AG04450 (cell line): ENCODE measurements at regions of chr1 and their contacts with region 1.

Region 1: DNA sequence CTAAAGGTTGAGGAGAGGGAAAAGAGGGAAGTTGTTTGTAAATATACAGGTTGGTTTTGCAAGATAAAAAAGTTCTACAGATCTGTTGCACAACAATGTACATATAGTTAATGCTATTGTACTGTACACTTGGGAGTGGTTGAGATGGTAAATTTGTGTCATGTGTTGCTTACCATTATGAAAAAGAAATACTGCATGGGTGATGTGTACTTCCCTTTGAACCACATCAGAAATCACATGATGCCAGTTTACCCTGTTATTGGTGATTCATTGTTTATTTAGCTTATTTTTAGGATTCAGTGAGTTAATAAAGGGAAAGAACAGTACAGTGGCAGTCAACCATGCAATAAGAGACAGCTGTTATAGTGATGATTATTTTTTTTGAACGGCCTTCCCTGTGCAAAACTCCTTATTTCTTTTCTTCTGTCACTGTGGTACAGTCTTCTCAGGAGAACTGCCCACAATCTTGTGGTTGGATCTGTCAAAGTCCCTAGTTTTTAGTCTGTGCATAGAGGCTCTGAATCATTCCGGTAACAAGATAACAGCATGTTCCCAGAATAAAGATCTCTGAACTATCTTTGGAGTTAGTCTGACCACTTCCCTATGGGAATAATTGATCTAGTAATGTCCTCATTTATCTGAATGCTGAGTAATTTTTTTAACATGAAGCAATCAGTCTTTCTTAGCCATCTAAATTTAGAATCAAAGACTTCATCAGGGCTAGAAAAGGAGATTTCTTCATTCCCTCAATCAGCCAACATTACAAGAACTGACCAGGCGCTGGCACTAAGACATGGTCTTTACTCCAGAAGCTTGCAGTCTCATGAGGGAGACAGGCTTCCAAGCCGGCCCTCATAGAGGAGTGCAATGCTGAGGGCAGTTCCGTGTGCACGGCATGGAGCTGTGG is 84.2 kb downstream of the SH3GLB1 start:
- DNase-seq: no peak
- H3K4me3 ChIP-seq: no peak overlapping the region
- H3K27ac ChIP-seq: peak overlapping the region; percentile 63
- H3K27me3 ChIP-seq: no peaks in the 10 kb centered on the region
- CTCF ChIP-seq: no peak

Region 2: DNA sequence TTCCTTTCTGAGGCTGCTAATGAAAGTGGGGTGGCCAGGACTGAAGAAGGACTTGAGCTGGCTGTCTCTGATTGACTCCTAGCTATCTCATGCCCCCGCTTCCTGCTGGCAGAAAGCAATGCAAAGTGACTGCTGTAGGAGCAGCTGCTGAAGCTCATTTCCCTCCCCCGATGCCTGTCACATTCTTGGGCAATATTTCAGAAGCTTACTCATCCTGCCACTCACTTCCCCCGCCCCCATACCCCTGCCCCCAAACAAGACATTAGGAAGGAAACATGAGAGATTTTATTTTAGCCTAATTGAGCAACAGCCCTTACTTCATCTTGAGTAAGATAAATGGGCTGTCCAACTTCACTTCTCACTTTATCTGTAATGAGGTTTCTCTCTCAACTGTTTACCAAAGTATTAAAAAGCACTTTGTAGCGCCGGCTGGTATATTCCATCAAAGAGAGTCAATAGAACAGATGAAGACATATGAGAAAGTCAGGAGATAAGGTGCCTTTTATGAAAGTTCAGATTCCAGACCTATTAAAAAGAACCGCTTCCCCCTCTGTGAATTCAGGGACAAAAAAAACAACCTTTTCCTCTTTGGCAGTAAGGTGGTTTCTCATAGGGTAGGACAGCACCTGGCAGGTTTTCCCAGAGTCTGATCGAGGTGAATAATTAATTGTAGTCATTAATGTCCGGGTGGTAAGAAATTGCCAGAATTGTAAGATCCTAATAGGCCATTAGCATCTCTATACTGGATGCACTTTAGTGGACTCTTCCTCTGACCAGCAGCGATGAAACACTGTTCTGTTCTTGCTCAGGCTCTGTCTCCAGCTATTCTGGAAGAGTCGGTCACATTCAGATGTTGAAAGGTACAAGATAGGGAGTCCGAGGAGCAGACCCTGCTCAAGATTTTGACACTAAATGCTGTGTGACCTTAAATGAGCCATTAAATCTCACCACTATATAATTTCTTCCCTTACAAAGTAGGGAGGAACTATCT is 14.0 kb before region 1 on chr1:
- CTCF ChIA-PET with region 1: no interaction called
- POLR2A ChIA-PET with region 1: no interaction called
- DNase-seq: peak; percentile 76
- H3K4me3 ChIP-seq: peak overlapping the region; percentile 43; the same call in 1 of the 2 replicates
- H3K27ac ChIP-seq: peak overlapping the region; percentile 86
- H3K27me3 ChIP-seq: no peaks in the 10 kb centered on the region
- CTCF ChIP-seq: no peak

Region 3: DNA sequence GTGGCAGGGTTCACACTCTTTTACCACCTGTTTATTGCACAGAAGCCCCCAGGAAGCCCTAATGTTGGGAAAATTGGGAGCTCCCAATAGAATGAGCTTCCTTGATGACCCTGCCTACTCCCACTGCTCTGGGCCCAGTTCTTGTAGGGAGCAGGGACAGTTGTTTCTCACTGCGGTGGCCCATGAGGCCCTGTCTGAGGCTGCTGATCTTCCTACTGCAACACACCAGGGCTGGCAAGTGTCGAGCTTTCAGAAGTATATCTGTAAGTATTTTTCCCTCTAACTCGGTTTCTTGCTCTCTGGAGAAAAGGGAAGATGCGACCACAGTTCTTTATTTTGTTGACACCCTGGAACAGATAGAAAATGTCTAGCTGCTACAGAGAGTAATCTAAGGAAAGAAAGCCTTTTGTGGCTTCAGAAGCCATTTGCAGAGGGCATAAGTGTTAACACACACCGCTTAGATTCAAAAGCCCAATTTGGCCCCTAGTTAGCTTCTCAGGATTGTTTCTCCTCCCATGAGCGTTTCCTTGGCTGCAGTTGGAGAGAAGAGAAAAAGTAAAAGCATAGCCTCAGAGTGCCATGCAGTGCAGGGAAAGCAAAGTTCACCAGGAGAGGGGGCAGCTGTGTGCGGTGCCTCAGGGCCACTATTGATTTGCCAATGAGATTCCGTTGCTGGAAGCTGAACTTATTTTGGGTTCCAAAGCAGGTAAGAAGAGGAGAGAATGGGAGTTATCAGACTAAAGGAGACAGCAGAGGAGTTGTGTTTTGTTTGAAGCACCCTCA is 22.8 kb after region 1 on chr1:
- CTCF ChIA-PET with region 1: no interaction called
- POLR2A ChIA-PET with region 1: interaction called, 12 read pairs
- DNase-seq: no peak
- H3K4me3 ChIP-seq: no peak overlapping the region
- H3K27ac ChIP-seq: no peak overlapping the region
- H3K27me3 ChIP-seq: peaks cover 3% of the 10 kb centered on the region
- CTCF ChIP-seq: no peak

Region 4: GRCh38 chr1:87151500-87152421 is 363.2 kb after region 1 on chr1:
- CTCF ChIA-PET with region 1: no interaction called
- POLR2A ChIA-PET with region 1: no interaction called
- DNase-seq: peak; percentile 20
- H3K4me3 ChIP-seq: peak overlapping the region; percentile 20
- H3K27ac ChIP-seq: peak overlapping the region; percentile 47
- H3K27me3 ChIP-seq: no peaks in the 10 kb centered on the region
- CTCF ChIP-seq: peak; percentile 50